WTC11 (cell line): ENCODE measurements at regions of chr1 and their contacts with region 1.

Region 1: GRCh38 chr1:77533660-77534305 is 148.7 kb downstream of the ZZZ3 start:
- DNase-seq: peak; percentile 66
- ATAC-seq: peak; percentile 82
- H3K4me3 Mint-ChIP-seq: no peak overlapping the region
- H3K27ac Mint-ChIP-seq: no peak overlapping the region
- H3K4me1 Mint-ChIP-seq: peaks cover 4% of the 10 kb centered on the region; the same call in 1 of the 2 replicates
- H3K27me3 Mint-ChIP-seq: no peaks in the 10 kb centered on the region
- CTCF ChIP-seq: peak; percentile 88

Region 2: GRCh38 chr1:77514921-77515776 is 18.6 kb before region 1 on chr1:
- CTCF ChIA-PET with region 1: interaction called, 21 read pairs
- POLR2A ChIA-PET with region 1: interaction called, 4 read pairs
- DNase-seq: peak; percentile 62
- ATAC-seq: peak; percentile 98
- H3K4me3 Mint-ChIP-seq: no peak overlapping the region
- H3K27ac Mint-ChIP-seq: peak overlapping the region; percentile 94
- H3K4me1 Mint-ChIP-seq: peaks cover 27% of the 10 kb centered on the region
- H3K27me3 Mint-ChIP-seq: no peaks in the 10 kb centered on the region
- CTCF ChIP-seq: no peak